Activated naive CD4-positive, alpha-beta T cell treated with anti-CD3 and anti-CD28 coated beads, Interleukin-2, amount 10 ng/mL, durations not matched to agents 7 days and 5 days (primary cell): ENCODE measurements at regions of chr5 and their contacts with region 1.

Region 1: GRCh38 chr5:133944263-133945185 is 23.9 kb downstream of the C5orf15 start:
- DNase-seq: peak; percentile 60
- H3K4me3 Mint-ChIP-seq: no peak overlapping the region
- H3K27ac Mint-ChIP-seq: no peak overlapping the region
- H3K4me1 Mint-ChIP-seq: no peaks in the 10 kb centered on the region
- H3K27me3 Mint-ChIP-seq: peaks cover 12% of the 10 kb centered on the region

Region 2: GRCh38 chr5:133423618-133424282 is 520.8 kb before region 1 on chr5:
- CTCF ChIA-PET with region 1: interaction called, 12 read pairs
- DNase-seq: peak; percentile 72
- H3K4me3 Mint-ChIP-seq: no peak overlapping the region
- H3K27ac Mint-ChIP-seq: no peak overlapping the region
- H3K4me1 Mint-ChIP-seq: peaks cover 4% of the 10 kb centered on the region
- H3K27me3 Mint-ChIP-seq: peaks cover 21% of the 10 kb centered on the region